Left ventricle myocardium inferior (tissue), 1 donor: ENCODE measurements at regions of chr5 and their contacts with region 1.

Region 1: DNA sequence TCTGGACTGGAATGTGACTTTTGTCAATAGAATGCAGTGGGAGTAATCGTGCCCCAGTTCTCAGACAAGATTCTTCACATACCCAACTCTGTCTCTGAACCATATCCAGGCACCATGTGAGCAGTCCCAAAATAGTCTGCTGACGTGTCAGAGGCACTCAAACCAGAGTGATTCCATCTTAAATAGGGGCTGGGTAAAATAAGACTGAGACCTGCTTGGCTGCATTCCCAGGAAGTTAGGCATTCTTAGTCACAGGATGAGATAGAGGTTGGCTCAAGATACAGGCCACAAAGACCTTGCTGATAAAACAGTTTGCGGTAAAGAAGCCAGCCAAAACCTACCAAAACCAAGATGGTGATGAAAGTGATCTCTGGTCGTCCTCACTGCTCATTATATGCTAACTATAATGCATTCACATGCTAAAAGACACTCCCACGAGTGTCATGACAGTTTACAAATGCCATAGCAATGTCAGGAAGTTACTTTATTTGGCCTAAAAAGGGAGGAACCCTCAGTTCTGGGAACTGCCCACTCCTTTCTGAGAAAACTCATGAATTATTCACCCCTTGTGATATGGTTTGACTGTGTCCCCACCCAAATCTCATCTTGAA is 16.9 kb upstream of the PLCXD3 start:
- DNase-seq: peak; percentile 24
- H3K4me3 ChIP-seq: no peak overlapping the region
- H3K27ac ChIP-seq: peak overlapping the region; percentile 76
- H3K4me1 ChIP-seq: peaks cover 14% of the 10 kb centered on the region
- H3K27me3 ChIP-seq: no peaks in the 10 kb centered on the region
- CTCF ChIP-seq: no peak

Region 2: DNA sequence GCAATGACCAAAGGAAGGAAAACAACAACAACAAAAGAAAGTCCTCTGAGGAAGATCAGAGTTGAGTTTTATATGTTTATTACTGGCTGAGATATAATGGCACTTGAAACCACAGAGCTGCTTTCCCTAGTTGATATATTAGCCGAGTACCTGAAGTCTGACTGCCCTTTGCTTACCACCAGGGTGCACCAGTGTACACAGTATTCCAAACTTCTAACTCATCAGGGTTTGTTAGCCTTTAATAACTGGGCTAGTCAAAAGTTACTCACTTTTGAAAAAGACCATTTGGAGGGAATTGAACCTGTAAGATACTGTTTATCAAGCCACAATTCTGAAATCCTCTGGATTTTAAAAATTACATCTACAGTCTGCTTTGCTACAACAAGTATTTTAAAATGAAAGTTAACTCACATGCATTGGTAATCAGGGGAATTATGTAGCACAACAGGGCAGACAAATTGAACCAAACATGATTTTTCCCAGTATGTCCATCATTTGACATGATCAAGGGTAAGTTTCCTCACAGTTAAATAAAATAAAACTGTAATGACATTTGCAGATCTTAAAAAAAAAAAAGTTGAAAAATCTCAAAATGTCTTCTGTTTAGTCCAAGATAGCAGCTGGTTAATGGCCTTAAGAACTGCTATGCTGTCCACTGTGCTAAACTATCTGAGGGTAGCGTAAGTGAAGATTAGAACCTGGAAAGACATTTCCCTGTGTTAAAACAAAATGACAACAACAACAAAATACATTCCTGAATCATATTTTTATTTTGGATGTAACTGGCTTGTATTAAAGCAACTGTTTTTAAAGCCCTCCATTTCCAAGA is 256.7 kb before region 1 on chr5:
- intact Hi-C with region 1: loop called (anchors 5 kb)
- DNase-seq: peak; percentile 26
- H3K4me3 ChIP-seq: no peak overlapping the region
- H3K27ac ChIP-seq: peak overlapping the region; percentile 57
- H3K4me1 ChIP-seq: peaks cover 36% of the 10 kb centered on the region
- H3K27me3 ChIP-seq: no peaks in the 10 kb centered on the region
- CTCF ChIP-seq: peak; percentile 84